ENCODE measurements at regions of chr6 and their contacts with region 1.

Region 1: GRCh38 chr6:12605888-12606345 is 110.7 kb upstream of the PHACTR1 start:
- DNase-seq: peak; percentile 86
- H3K4me3 ChIP-seq: peak overlapping the region; percentile 55
- H3K27ac ChIP-seq: no peak overlapping the region
- H3K4me1 ChIP-seq: peaks cover 58% of the 10 kb centered on the region
- CTCF ChIP-seq: peak; percentile 98

Region 2: DNA sequence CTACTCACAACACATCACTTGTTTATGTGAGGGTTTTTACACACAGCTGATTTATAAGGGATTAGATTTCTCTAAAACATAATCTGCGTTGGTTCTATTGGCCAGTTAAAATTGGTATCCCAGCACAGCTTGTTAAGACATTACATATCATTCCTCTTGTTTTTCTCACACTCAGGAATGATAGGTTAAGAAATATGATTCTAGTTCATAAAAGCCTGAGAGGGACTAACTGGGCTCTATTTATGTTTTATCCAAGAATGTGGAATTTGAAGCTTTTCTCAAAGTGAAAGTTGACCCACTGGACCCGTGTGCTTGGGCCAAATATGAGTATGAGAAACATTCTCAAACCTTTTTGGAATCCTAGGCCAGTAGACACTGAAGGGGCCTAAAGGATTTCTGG is 951.0 kb before region 1 on chr6:
- CTCF ChIA-PET with region 1: no interaction called
- POLR2A ChIA-PET with region 1: no interaction called
- intact Hi-C with region 1: loop called (anchors 5 kb)
- DNase-seq: no peak
- H3K4me3 ChIP-seq: no peak overlapping the region
- H3K27ac ChIP-seq: no peak overlapping the region
- H3K4me1 ChIP-seq: no peaks in the 10 kb centered on the region
- CTCF ChIP-seq: no peak

Region 3: GRCh38 chr6:12011276-12012076 is 594.4 kb before region 1 on chr6:
- CTCF ChIA-PET with region 1: no interaction called
- POLR2A ChIA-PET with region 1: no interaction called
- intact Hi-C with region 1: loop called (anchors 10 kb)
- DNase-seq: peak; percentile 96
- H3K4me3 ChIP-seq: peak overlapping the region; percentile 97
- H3K27ac ChIP-seq: peak overlapping the region; percentile 39
- H3K4me1 ChIP-seq: peaks cover 28% of the 10 kb centered on the region
- CTCF ChIP-seq: no peak

Region 4: DNA sequence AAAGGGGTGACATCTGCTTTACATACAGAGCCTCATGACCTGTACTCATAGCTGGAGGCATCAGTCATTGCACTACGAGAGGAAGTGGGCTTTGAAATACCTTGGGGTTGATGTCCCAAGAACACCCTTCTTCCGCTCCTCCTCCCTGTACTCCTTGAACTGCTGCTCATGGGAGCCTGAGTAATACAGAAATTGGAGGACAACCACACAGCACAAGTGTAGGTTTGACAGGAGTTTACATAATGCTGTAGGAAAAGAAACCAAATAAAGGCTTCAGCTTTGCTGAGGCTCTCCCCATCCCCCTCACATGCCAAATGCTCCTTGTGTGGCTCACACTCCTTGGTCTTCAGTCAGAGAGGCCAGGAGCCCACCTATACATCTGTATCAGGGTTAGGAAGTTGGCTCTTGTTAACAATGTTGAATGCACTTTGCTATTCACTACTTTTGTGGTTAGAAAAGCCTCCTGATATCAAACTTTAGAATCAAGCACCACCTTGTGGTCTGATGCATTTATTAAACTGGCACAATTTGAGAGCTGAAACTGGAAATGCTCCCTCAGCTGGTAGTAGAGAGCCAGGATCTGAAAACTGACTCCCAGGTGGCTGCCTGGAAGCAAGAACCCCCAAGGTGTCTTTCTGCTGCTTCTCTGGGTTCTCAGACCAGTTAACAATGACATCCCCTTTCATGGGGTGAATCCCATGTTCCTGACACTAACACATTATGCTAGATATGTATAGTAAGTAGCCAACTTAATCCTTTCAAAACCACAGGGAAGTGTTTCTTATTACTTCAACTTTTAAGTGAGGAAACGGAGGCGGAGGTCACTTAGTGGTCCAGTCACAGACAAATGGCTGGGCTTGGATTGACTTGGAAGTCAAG is 372.0 kb before region 1 on chr6:
- CTCF ChIA-PET with region 1: no interaction called
- POLR2A ChIA-PET with region 1: no interaction called
- intact Hi-C with region 1: loop called (anchors 5 kb)
- DNase-seq: peak; percentile 69
- H3K4me3 ChIP-seq: no peak overlapping the region
- H3K27ac ChIP-seq: no peak overlapping the region
- H3K4me1 ChIP-seq: no peaks in the 10 kb centered on the region
- CTCF ChIP-seq: peak; percentile 89

Region 5: GRCh38 chr6:12504319-12504966 is 101.5 kb before region 1 on chr6:
- CTCF ChIA-PET with region 1: no interaction called
- POLR2A ChIA-PET with region 1: no interaction called
- intact Hi-C with region 1: loop called (anchors 10 kb)
- DNase-seq: peak; percentile 40
- H3K4me3 ChIP-seq: no peak overlapping the region
- H3K27ac ChIP-seq: no peak overlapping the region
- H3K4me1 ChIP-seq: no peaks in the 10 kb centered on the region
- CTCF ChIP-seq: peak; percentile 77

Region 6: DNA sequence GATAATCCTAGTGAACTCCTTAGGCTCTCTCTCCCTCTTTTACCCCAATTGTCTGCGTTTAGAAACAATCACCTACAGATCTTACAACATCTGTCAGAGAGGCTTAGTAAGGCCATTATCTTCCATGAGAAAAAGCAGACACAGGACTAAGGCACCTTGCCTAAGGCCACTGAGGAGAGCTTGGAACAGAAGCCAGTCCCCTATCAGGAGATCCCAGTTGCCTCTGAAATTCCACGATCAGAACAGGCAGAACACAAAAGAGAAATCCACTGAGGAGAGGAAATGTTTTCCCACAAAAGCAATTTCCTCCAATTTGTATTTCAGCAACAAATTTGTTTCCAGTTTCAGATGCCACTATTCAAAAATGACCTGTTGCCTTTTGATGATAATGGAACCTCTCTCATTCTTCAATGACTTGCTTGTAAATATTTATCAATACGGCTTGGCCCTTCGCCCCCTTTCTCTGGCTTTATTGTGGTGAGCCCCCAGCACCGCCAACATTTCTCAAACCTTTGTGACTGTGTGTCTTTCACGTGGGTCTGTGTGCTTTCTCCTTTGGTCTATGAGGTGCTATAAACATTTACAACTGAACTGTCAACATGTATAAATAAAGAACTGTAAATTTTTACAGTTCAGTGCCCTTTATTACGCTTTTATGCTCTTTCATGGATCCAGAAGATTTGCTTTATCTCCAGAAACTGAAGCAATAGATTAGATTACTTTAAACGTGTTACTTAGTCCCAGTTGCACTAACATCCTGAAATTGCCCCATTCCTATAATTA is 77.1 kb before region 1 on chr6:
- CTCF ChIA-PET with region 1: no interaction called
- POLR2A ChIA-PET with region 1: no interaction called
- intact Hi-C with region 1: no loop called
- DNase-seq: no peak
- H3K4me3 ChIP-seq: no peak overlapping the region
- H3K27ac ChIP-seq: no peak overlapping the region
- H3K4me1 ChIP-seq: no peaks in the 10 kb centered on the region
- CTCF ChIP-seq: no peak

Region 7: DNA sequence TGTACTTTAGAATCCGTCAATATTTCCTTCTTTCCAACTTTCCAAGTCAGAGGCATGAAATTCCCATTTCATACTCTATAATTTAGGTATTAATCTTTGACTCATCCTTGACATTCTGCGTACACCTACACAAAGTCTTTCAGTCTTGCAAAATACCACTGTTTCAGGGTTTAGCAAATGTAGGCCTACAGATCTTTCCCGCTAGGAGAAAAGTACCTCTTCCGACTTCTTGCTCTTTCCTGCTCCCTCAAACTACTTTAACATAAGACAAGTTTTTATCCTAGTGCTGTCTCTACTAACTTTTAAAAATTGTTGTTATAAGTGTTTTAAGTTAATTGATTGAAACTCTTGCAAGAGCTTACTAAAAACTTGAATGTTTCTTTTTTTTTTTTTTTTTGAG is 92.4 kb after region 1 on chr6:
- CTCF ChIA-PET with region 1: no interaction called
- POLR2A ChIA-PET with region 1: no interaction called
- intact Hi-C with region 1: no loop called
- DNase-seq: no peak
- H3K4me3 ChIP-seq: no peak overlapping the region
- H3K27ac ChIP-seq: no peak overlapping the region
- H3K4me1 ChIP-seq: no peaks in the 10 kb centered on the region
- CTCF ChIP-seq: no peak

Measured in OCI-LY7 (cell line).